ENCODE measurements at regions of chr5 and their contacts with region 1.

Region 1: DNA sequence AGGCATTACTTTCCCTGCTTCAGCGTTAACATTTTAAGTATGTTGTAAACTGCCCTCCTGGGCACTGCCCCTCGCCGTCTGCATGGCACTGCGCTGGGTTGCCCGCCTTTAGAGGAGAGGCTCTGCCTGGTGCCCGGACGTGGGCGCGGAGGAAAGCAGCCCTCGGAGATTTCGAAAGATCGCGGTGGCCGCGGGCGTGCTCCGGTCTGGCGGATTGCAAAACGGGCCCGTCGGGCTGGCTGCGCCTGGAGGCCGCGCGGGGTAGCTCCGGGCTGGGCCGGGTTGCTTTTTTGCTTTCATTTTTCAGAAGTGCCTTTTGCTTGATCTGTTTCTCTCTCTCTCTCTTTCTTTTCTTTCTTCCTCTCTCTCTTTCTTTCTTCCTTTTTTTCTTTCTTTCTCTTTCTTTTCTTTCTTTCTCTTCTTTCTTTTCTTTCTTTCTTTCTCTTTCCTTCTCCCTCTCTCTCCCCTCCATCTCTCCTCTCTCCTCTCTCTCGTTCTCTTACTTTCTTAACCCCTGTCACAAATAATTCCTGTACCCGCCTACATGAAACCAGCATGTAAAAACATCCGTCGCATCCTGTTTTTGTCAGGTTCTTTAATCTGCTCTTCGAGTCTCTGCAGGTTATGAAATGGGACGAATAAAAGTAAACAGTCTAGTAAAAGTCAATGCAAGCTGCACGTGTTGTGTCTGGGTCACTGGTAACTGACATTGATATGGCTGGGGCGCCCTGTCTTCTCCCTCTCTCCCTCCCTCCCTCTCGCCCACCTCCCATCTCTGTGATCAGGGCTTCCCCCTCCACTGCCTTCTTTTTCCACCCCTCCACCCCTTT is 1.7 kb downstream of the FST start:
- DNase-seq: peak; percentile 83
- ATAC-seq: peak; percentile 70
- H3K4me3 Mint-ChIP-seq: peak overlapping the region; percentile 79
- H3K27ac Mint-ChIP-seq: peak overlapping the region; percentile 80
- H3K4me1 Mint-ChIP-seq: peaks cover 40% of the 10 kb centered on the region
- H3K27me3 Mint-ChIP-seq: peaks cover 40% of the 10 kb centered on the region

Region 2: GRCh38 chr5:53303105-53303504 is 179.0 kb before region 1 on chr5:
- CTCF ChIA-PET with region 1: no interaction called
- POLR2A ChIA-PET with region 1: no interaction called
- intact Hi-C with region 1: loop called in 1 of 2 experiments (anchors 5 kb)
- DNase-seq: peak; percentile 14
- ATAC-seq: peak; percentile 93
- H3K4me3 Mint-ChIP-seq: no peak overlapping the region
- H3K27ac Mint-ChIP-seq: peak overlapping the region; percentile 33
- H3K4me1 Mint-ChIP-seq: peaks cover 20% of the 10 kb centered on the region
- H3K27me3 Mint-ChIP-seq: peaks cover 12% of the 10 kb centered on the region

Region 3: GRCh38 chr5:53560506-53561191 is 78.5 kb after region 1 on chr5 and contains the start of gene NDUFS4:
- CTCF ChIA-PET with region 1: no interaction called
- POLR2A ChIA-PET with region 1: no interaction called
- intact Hi-C with region 1: loop called (anchors 2 to 5 kb)
- DNase-seq: peak; percentile 92
- ATAC-seq: peak; percentile 91
- H3K4me3 Mint-ChIP-seq: peak within 1 kb of the TSS; percentile 84
- H3K27ac Mint-ChIP-seq: peak within 1 kb of the TSS; percentile 92
- H3K4me1 Mint-ChIP-seq: peaks cover 25% of the 10 kb centered on the region
- H3K27me3 Mint-ChIP-seq: peaks cover 20% of the 10 kb centered on the region
- total RNA-seq, gene NDUFS4: 52.2 to 69.1 TPM

Region 4: GRCh38 chr5:53991942-53992341 is 509.8 kb after region 1 on chr5:
- CTCF ChIA-PET with region 1: no interaction called
- POLR2A ChIA-PET with region 1: no interaction called
- intact Hi-C with region 1: loop called in 1 of 2 experiments (anchors 2 kb)
- DNase-seq: no peak
- ATAC-seq: no peak
- H3K4me3 Mint-ChIP-seq: no peak overlapping the region
- H3K27ac Mint-ChIP-seq: no peak overlapping the region
- H3K4me1 Mint-ChIP-seq: peaks cover 7% of the 10 kb centered on the region
- H3K27me3 Mint-ChIP-seq: no peaks in the 10 kb centered on the region

Region 5: GRCh38 chr5:54217826-54218503 is 735.9 kb after region 1 on chr5:
- CTCF ChIA-PET with region 1: no interaction called
- POLR2A ChIA-PET with region 1: no interaction called
- intact Hi-C with region 1: loop called (anchors 1 to 2 kb)
- DNase-seq: peak; percentile 12
- ATAC-seq: no peak
- H3K4me3 Mint-ChIP-seq: no peak overlapping the region
- H3K27ac Mint-ChIP-seq: no peak overlapping the region
- H3K4me1 Mint-ChIP-seq: peaks cover 7% of the 10 kb centered on the region
- H3K27me3 Mint-ChIP-seq: no peaks in the 10 kb centered on the region

Region 6: GRCh38 chr5:54229041-54229780 is 747.1 kb after region 1 on chr5:
- CTCF ChIA-PET with region 1: interaction called, 9 read pairs
- POLR2A ChIA-PET with region 1: no interaction called
- intact Hi-C with region 1: loop called in 1 of 2 experiments (anchors 1 kb)
- DNase-seq: peak; percentile 86
- ATAC-seq: peak; percentile 90
- H3K4me3 Mint-ChIP-seq: no peak overlapping the region
- H3K27ac Mint-ChIP-seq: no peak overlapping the region
- H3K4me1 Mint-ChIP-seq: peaks cover 6% of the 10 kb centered on the region
- H3K27me3 Mint-ChIP-seq: no peaks in the 10 kb centered on the region